B cell (primary cell): ENCODE measurements at regions of chr6 and their contacts with region 1.

Region 1: GRCh38 chr6:72411872-72412708 is 209.8 kb upstream of the KCNQ5 start:
- DNase-seq: peak; percentile 91
- ATAC-seq: peak; percentile 100
- H3K4me3 ChIP-seq: no peak overlapping the region
- H3K4me3 Mint-ChIP-seq: no peak overlapping the region
- H3K27ac ChIP-seq: no peak overlapping the region
- H3K27ac Mint-ChIP-seq: no peak overlapping the region
- H3K4me1 ChIP-seq: no peaks in the 10 kb centered on the region
- H3K4me1 Mint-ChIP-seq: peaks cover 5% of the 10 kb centered on the region
- H3K27me3 ChIP-seq: peaks cover 0 to 3% (median 1%) of the 10 kb centered on the region in 4 experiments
- H3K27me3 Mint-ChIP-seq: peaks cover 17% of the 10 kb centered on the region
- CTCF ChIP-seq: peak; percentile 100

Region 2: DNA sequence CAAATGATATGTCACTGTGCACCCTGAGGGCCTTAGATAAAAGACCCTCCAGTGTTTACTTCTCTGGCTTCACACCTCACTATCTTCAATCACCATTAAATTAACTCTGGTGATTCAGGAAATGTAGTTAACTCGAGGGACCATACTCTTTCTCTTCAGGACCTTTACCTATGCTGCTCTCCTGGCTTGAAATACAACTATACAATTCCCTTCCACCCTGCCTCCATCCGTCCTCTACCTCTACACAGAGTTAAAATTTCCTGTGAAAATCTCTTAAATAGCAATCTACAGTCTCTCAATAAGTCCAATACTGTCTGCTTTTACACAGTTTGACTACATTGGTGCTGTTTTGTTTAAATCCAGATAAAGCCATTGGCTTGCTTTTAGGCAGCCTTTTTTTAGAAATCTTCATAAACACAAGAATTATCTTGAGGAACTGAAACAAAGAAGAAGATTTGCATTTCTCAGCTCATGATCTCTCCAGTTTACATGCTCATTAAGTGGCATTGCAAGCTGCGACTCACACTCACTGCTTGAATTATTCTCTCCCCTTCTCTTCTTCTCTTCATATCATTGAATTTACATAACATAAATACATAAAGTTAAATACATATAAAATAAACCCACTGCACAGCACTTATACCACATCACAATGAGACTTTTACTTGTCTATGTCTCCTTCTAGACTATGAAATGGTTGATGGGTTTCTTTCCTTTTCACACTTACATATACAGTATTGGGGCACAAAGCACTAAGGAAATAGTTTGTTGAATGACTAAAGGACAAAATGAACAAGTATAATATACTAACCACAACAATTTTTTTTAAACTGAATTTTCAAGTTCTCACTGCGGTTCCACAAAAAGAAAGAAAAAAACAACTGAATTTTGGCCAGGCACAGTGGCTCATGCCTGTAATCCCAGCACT is 29.2 kb before region 1 on chr6:
- CTCF ChIA-PET with region 1: interaction called, 12 read pairs
- POLR2A ChIA-PET with region 1: no interaction called
- intact Hi-C with region 1: no loop called
- DNase-seq: peak; percentile 68
- ATAC-seq: peak; percentile 80
- H3K4me3 ChIP-seq: peak overlapping the region in 3 of 5 experiments; percentile 4 to 46 (median 17)
- H3K4me3 Mint-ChIP-seq: peak overlapping the region; percentile 72
- H3K27ac ChIP-seq: peak overlapping the region; percentile 79 to 83
- H3K27ac Mint-ChIP-seq: peak overlapping the region; percentile 92
- H3K4me1 ChIP-seq: peaks cover 23 to 29% of the 10 kb centered on the region in 2 donors
- H3K4me1 Mint-ChIP-seq: peaks cover 32% of the 10 kb centered on the region
- H3K27me3 ChIP-seq: no peaks in the 10 kb centered on the region
- H3K27me3 Mint-ChIP-seq: no peaks in the 10 kb centered on the region
- CTCF ChIP-seq: no peak

Region 3: GRCh38 chr6:72401865-72402264 is 10.2 kb before region 1 on chr6:
- CTCF ChIA-PET with region 1: interaction called, 22 read pairs
- POLR2A ChIA-PET with region 1: no interaction called
- intact Hi-C with region 1: no loop called
- DNase-seq: no peak
- ATAC-seq: no peak
- H3K4me3 ChIP-seq: no peak overlapping the region
- H3K4me3 Mint-ChIP-seq: no peak overlapping the region
- H3K27ac ChIP-seq: no peak overlapping the region
- H3K27ac Mint-ChIP-seq: no peak overlapping the region
- H3K4me1 ChIP-seq: no peaks in the 10 kb centered on the region
- H3K4me1 Mint-ChIP-seq: peaks cover 2% of the 10 kb centered on the region
- H3K27me3 ChIP-seq: no peaks in the 10 kb centered on the region
- H3K27me3 Mint-ChIP-seq: peaks cover 3% of the 10 kb centered on the region
- CTCF ChIP-seq: no peak

Region 4: GRCh38 chr6:72425003-72425681 is 13.1 kb after region 1 on chr6:
- CTCF ChIA-PET with region 1: interaction called, 49 read pairs
- POLR2A ChIA-PET with region 1: no interaction called
- intact Hi-C with region 1: no loop called
- DNase-seq: no peak
- ATAC-seq: no peak
- H3K4me3 ChIP-seq: no peak overlapping the region
- H3K4me3 Mint-ChIP-seq: no peak overlapping the region
- H3K27ac ChIP-seq: no peak overlapping the region
- H3K27ac Mint-ChIP-seq: no peak overlapping the region
- H3K4me1 ChIP-seq: no peaks in the 10 kb centered on the region
- H3K4me1 Mint-ChIP-seq: no peaks in the 10 kb centered on the region
- H3K27me3 ChIP-seq: peaks cover 0 to 4% (median 0%) of the 10 kb centered on the region in 4 experiments
- H3K27me3 Mint-ChIP-seq: peaks cover 13% of the 10 kb centered on the region
- CTCF ChIP-seq: no peak

Region 5: GRCh38 chr6:73129653-73130443 is 717.8 kb after region 1 on chr6:
- CTCF ChIA-PET with region 1: interaction called, 220 read pairs
- POLR2A ChIA-PET with region 1: no interaction called
- intact Hi-C with region 1: loop called (anchors 1 kb)
- DNase-seq: peak; percentile 82
- ATAC-seq: peak; percentile 93
- H3K4me3 ChIP-seq: peak overlapping the region in 3 of 5 experiments; percentile 3 to 36 (median 25)
- H3K4me3 Mint-ChIP-seq: peak overlapping the region; percentile 61
- H3K27ac ChIP-seq: no peak overlapping the region
- H3K27ac Mint-ChIP-seq: no peak overlapping the region
- H3K4me1 ChIP-seq: peaks cover 3 to 6% of the 10 kb centered on the region in 2 donors
- H3K4me1 Mint-ChIP-seq: peaks cover 7% of the 10 kb centered on the region
- H3K27me3 ChIP-seq: no peaks in the 10 kb centered on the region
- H3K27me3 Mint-ChIP-seq: no peaks in the 10 kb centered on the region
- CTCF ChIP-seq: peak; percentile 100

Region 6: GRCh38 chr6:73180763-73181619 is 768.9 kb after region 1 on chr6:
- CTCF ChIA-PET with region 1: interaction called, 21 read pairs
- POLR2A ChIA-PET with region 1: no interaction called
- intact Hi-C with region 1: loop called (anchors 1 kb)
- DNase-seq: peak; percentile 76
- ATAC-seq: peak; percentile 90
- H3K4me3 ChIP-seq: peak overlapping the region in 4 of 5 experiments; percentile 11 to 54 (median 46)
- H3K4me3 Mint-ChIP-seq: peak overlapping the region; percentile 88
- H3K27ac ChIP-seq: no peak overlapping the region
- H3K27ac Mint-ChIP-seq: peak overlapping the region; percentile 43
- H3K4me1 ChIP-seq: peaks cover 23 to 25% of the 10 kb centered on the region in 2 donors
- H3K4me1 Mint-ChIP-seq: peaks cover 12% of the 10 kb centered on the region
- H3K27me3 ChIP-seq: no peaks in the 10 kb centered on the region
- H3K27me3 Mint-ChIP-seq: no peaks in the 10 kb centered on the region
- CTCF ChIP-seq: peak; percentile 95

Region 7: DNA sequence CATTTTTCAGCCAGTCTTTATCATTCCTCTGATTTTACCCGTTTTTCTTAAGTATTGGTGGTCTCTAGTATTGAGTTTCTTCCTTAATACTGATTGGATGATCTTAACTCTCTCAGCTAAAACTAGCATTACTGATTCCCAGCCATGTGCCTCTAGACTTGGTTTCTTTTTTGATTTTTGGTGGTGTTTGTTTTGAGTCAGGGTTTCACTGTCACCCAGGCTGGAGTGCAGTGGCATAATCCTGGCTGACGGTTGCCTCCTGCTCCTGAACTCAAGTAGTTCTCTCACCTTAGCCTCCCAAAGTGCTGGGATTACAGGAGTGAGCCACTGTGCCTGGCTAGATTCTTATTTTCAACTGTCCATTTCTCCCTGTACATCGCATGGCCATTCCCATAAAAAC is 917.1 kb after region 1 on chr6:
- CTCF ChIA-PET with region 1: interaction called, 27 read pairs
- POLR2A ChIA-PET with region 1: no interaction called
- intact Hi-C with region 1: loop called (anchors 1 kb)
- DNase-seq: no peak
- ATAC-seq: no peak
- H3K4me3 ChIP-seq: no peak overlapping the region
- H3K4me3 Mint-ChIP-seq: no peak overlapping the region
- H3K27ac ChIP-seq: no peak overlapping the region
- H3K27ac Mint-ChIP-seq: no peak overlapping the region
- H3K4me1 ChIP-seq: no peaks in the 10 kb centered on the region
- H3K4me1 Mint-ChIP-seq: no peaks in the 10 kb centered on the region
- H3K27me3 ChIP-seq: peaks cover 0 to 6% (median 0%) of the 10 kb centered on the region in 4 experiments
- H3K27me3 Mint-ChIP-seq: peaks cover 39% of the 10 kb centered on the region
- CTCF ChIP-seq: no peak